ENCODE measurements at regions of chr1 and their contacts with region 1.

Region 1: GRCh38 chr1:53837646-53837923 is 511 bp downstream of the NDC1 start:
- DNase-seq: no peak
- H3K4me3 Mint-ChIP-seq: peak overlapping the region; percentile 97
- H3K27ac Mint-ChIP-seq: peak overlapping the region; percentile 99
- H3K4me1 Mint-ChIP-seq: peaks cover 28% of the 10 kb centered on the region
- H3K27me3 Mint-ChIP-seq: peaks cover 2% of the 10 kb centered on the region

Region 2: DNA sequence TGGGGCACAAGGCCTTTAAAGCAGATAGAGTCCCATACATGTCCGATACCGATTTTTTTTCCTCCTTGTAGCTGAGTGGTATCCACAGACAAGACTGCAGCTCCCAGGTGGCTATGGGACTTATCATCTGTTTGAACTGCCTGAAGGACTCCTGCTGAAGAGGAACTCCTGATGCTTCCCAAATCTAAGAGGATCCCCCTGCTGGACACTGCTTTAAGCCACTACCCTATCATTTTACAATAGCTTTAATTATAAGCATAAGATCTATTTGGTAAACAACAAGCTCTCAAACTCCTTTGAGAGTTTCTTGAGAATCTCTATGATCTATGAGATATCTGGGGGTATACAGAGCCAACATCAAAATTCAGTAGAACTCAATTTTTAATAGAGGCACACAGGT is 11.2 kb before region 1 on chr1:
- CTCF ChIA-PET with region 1: interaction called, 10 read pairs
- POLR2A ChIA-PET with region 1: no interaction called
- DNase-seq: no peak
- H3K4me3 Mint-ChIP-seq: no peak overlapping the region
- H3K27ac Mint-ChIP-seq: no peak overlapping the region
- H3K4me1 Mint-ChIP-seq: no peaks in the 10 kb centered on the region
- H3K27me3 Mint-ChIP-seq: no peaks in the 10 kb centered on the region

Region 3: DNA sequence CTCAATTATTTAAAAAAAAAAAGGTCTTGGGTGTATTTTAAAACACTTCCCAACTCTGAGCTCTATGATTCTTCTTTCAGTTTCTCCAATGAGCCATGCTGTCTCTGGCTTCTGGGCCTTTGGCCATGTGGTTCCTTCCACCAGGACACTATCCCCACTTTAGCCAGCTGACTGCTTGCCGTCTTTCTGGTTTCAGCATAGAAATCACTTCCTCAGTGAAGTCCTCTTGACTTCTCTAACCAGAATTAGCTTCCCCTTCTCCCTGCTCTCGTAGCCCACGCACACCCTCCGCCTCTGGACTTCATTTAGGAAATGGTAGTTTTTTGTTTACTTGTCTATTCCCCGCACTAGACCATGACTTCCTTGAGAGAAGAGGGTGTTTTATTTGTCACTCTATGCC is 55.3 kb after region 1 on chr1:
- CTCF ChIA-PET with region 1: no interaction called
- POLR2A ChIA-PET with region 1: no interaction called
- DNase-seq: no peak
- H3K4me3 Mint-ChIP-seq: no peak overlapping the region
- H3K27ac Mint-ChIP-seq: no peak overlapping the region
- H3K4me1 Mint-ChIP-seq: peaks cover 31% of the 10 kb centered on the region
- H3K27me3 Mint-ChIP-seq: no peaks in the 10 kb centered on the region